Endothelial cell of umbilical vein (primary cell): ENCODE measurements at regions of chr7 and their contacts with region 1.

Region 1: GRCh38 chr7:144174613-144175012 is 8.7 kb upstream of the CTAGE4 start:
- DNase-seq: no peak
- H3K4me3 ChIP-seq: no peak overlapping the region
- H3K27ac ChIP-seq: no peak overlapping the region
- H3K4me1 ChIP-seq: no peaks in the 10 kb centered on the region
- H3K27me3 ChIP-seq: peaks cover 0 to 4% of the 10 kb centered on the region in 2 experiments
- CTCF ChIP-seq: no peak
- POLR2A ChIP-seq: no peak

Region 2: DNA sequence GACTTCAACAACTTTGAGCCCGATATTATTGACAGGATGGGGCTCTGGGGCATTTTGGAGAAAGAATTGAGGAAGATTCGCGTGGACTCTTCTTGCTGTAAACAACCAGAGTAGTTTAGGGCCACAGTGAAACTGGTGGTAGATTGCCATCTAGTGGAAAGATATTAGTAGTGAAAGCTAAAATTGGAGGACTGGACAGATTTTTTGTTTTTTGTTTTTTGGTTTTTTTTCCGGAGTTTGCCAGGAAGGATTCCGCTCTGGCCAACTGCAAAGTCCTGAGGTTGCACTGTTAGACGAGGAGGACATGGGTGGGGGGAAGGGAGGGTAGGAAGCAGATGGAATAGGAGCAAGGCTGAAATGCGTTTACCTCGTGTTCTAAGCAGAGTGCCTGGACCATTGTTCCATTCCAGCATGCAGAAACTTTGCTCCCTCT is 217.2 kb after region 1 on chr7:
- CTCF ChIA-PET with region 1: interaction called, 19 read pairs
- POLR2A ChIA-PET with region 1: no interaction called
- dilution Hi-C with region 1: no loop called
- intact Hi-C with region 1: no loop called
- DNase-seq: peak; percentile 62
- H3K4me3 ChIP-seq: no peak overlapping the region
- H3K27ac ChIP-seq: no peak overlapping the region
- H3K4me1 ChIP-seq: no peaks in the 10 kb centered on the region
- H3K27me3 ChIP-seq: no peaks in the 10 kb centered on the region
- CTCF ChIP-seq: peak; percentile 44 to 55
- POLR2A ChIP-seq: no peak